ENCODE measurements at regions of chr7 and their contacts with region 1.

Region 1: GRCh38 chr7:28626624-28627262 is 214.4 kb downstream of the CREB5 start:
- DNase-seq: no peak
- ATAC-seq: no peak

Region 2: DNA sequence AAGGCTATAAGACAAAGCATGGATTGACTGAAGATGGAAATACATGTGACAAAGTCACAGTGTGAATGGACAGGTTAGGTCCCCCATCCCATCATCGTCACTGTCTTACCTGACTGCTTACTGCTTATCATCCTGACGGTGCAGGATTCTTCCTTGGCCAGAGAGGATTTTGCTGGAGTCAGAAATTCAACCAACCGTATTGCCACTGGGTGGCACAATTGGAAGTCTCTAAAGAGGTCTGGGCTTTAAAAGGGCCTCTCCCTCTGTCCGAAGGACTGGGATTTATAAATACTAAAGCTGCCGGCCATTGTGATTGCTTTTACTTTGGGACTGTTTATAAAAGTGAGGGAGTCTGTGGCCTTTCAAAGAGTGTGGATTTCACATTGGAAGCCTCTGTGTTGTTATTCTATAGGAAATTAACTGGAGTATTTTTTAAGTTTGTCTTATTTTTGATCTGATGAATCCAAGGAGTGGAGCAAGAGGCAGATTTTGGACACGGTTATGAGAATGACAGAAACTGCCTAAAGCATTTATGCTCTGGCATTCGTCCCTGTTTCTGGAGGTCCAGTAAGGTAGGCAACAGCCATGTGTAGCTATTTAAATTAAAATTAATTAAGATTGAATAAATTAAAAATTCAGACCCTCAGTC is 327.7 kb before region 1 on chr7:
- intact Hi-C with region 1: loop called (anchors 5 kb)
- DNase-seq: no peak
- ATAC-seq: peak; percentile 69

Region 3: DNA sequence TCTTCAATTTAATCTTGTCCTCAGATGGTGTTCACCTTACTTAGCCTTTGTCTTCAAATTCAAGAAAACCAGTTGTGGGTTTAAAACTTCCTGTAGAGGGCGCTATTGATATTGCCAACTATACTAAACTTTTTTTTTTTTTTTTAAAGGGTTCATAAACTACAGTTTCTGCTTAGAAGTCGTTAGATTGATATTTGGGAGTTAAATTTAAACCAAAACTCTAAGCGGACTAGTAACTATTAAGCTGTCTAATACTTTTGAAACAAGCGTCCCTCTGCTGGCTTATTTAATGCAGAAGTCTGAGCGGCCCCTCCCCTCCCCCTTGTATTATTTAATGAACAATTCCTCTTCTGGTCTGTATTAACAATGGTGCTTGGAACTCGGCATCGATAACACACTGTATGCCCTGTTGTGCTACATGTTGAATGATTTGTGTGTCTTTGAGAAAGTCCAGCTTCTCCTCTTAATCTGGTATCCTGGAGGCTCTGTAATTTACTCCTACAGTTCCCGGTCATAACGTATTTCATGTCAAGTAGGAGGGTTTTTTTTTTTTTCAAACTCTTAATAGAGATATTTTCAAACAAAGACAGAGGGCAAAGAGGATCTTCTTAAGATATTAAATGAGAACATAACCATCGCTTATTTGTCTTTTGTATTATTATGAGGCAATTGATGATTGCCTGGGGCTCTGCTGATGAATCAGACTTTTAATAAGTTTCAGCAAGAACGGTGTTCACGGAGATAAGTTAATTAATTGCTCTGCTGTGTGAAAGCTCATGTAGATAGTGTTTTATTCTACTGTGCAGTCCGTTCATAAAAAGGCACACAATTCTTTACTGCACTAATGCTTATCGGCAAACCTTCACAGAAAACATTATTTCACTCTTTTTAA is 237.0 kb before region 1 on chr7:
- intact Hi-C with region 1: loop called (anchors 2 kb)
- DNase-seq: no peak
- ATAC-seq: peak; percentile 13

Region 4: GRCh38 chr7:28520074-28521015 is 106.4 kb before region 1 on chr7:
- intact Hi-C with region 1: no loop called
- DNase-seq: no peak
- ATAC-seq: no peak

Region 5: GRCh38 chr7:28685644-28686417 is 59.1 kb after region 1 on chr7:
- intact Hi-C with region 1: loop called (anchors 5 kb)
- DNase-seq: peak; percentile 92
- ATAC-seq: peak; percentile 94